Mucosa of descending colon (tissue), 3 donors: ENCODE measurements at regions of chr11 and their contacts with region 1.

Region 1: DNA sequence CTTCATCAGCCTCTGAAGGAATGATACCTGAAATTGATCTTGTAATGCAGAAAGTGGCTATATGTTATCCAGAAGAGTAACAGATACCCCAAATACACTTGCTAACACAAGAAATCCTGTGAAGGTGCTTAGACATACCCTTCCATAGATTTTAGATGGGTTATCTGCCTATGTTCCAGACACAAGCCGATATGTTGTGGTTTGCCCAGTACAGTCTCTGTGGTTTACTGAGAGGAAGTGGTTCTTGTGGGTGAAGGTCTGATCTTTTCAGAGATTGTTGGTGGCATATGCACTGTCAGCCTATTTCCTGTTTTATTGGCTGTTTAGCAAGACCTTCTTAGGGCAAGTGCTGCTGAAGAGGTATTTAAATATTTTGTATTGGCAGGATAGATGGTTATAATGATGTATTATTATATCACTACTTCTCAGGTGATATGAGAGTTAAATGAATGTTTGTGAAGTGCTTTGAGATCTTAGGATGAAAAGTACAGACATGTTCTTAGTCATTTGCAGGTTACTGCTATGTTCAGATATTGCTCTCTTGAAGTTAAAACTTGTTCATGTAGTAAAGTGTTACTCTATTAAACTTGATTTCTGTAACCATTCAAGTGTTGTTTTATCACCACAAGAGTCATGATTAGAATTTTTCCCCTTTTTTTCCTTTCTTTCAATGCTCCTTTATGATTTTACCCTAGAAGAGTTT is 8.2 kb downstream of the ARHGEF12 start:
- DNase-seq: peak in 1 of 3 donors; percentile 61
- ATAC-seq: peak; percentile 52
- H3K4me3 ChIP-seq: no peak overlapping the region
- H3K4me1 ChIP-seq: peaks cover 47% of the 10 kb centered on the region
- CTCF ChIP-seq: no peak

Region 2: GRCh38 chr11:120235024-120235861 is 109.2 kb before region 1 on chr11:
- intact Hi-C with region 1: no loop called
- DNase-seq: peak in 2 of 3 donors; percentile 83 to 84
- ATAC-seq: peak; percentile 69
- H3K4me3 ChIP-seq: no peak overlapping the region
- H3K4me1 ChIP-seq: peaks cover 7% of the 10 kb centered on the region
- CTCF ChIP-seq: peak; percentile 66

Region 3: DNA sequence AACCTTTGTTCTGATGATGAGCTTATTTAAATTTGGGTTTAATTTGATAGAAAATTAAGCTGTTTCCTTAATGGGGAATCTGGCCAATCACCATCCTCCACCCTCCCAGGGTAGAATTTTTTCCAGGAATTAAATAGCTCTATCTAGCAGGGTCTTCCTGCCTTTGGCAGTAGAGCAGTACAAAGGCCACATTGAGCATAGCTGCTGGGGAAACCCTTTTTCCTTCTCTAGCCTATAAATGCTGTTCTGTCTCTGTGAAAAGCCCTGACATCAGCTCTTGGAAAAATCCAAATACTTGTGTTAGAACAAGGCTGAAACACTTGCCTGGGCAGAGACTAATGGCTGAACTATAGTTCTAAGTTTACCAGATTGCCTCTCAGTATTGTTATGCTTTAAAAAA is 46.8 kb after region 1 on chr11:
- intact Hi-C with region 1: loop called in 1 of 2 experiments (anchors 10 kb)
- DNase-seq: no peak
- ATAC-seq: peak; percentile 42
- H3K4me3 ChIP-seq: no peak overlapping the region
- H3K4me1 ChIP-seq: peaks cover 9% of the 10 kb centered on the region
- CTCF ChIP-seq: no peak